Left cardiac atrium (tissue), 4 donors: ENCODE measurements at regions of chr11 and their contacts with region 1.

Region 1: GRCh38 chr11:76551400-76551799 is 106.6 kb downstream of the EMSY start:
- DNase-seq: no peak
- ATAC-seq: no peak

Region 2: DNA sequence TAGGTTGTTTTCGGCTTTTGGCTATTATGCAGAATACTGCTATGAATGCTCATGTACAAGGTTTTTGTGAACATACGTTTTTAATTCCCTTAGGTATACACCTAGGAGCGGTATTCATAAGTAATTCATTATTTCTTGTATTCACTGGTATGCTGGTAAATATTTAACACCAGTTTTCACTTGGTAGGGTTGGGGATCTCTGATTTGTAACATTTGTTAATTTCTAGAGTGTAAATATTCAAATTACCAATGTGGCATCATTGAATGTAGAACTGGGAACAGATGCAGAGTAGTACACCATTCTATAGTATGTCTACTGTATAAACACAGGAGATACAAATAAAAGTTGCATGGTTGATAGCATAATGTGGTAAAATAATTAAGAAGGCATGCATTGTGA is 154.0 kb before region 1 on chr11:
- intact Hi-C with region 1: no loop called
- DNase-seq: no peak
- ATAC-seq: no peak

Region 3: GRCh38 chr11:76680518-76681425 is 129.4 kb after region 1 on chr11:
- intact Hi-C with region 1: loop called in 1 of 2 experiments (anchors 2 kb)
- DNase-seq: peak; percentile 81
- ATAC-seq: peak; percentile 81 to 87